CD8-positive, alpha-beta T cell (primary cell): ENCODE measurements at regions of chr1 and their contacts with region 1.

Region 1: DNA sequence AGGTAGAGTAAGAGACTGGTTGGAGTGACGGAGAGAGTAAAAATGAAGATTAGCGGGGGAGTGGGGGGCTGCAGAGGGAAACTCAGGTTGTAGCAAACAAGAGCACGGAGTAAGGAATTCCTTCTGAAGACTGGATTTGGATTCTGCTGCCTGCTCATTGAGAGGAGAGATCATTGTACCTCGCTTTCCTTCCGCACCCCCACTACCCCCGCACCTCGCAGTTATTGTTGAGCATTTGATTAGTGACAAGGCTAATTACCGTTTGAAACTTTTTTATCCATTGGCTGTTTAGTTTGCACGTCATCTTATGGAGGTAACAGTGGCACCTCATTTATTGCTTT is 463 bp downstream of the PRPF3 start:
- DNase-seq: peak in 2 of 9 experiments; percentile 24 to 26
- ATAC-seq: peak; percentile 24
- H3K4me3 ChIP-seq: peak overlapping the region; percentile 87 to 96
- H3K4me3 Mint-ChIP-seq: peak overlapping the region; percentile 99
- H3K27ac ChIP-seq: peak overlapping the region; percentile 92 to 93
- H3K27ac Mint-ChIP-seq: peak overlapping the region; percentile 99
- H3K4me1 ChIP-seq: peaks cover 19% of the 10 kb centered on the region
- H3K4me1 Mint-ChIP-seq: peaks cover 50% of the 10 kb centered on the region
- H3K27me3 ChIP-seq: no peaks in the 10 kb centered on the region
- H3K27me3 Mint-ChIP-seq: no peaks in the 10 kb centered on the region
- CTCF ChIP-seq: no peak

Region 2: GRCh38 chr1:150121236-150121862 is 200.4 kb before region 1 on chr1:
- CTCF ChIA-PET with region 1: no interaction called
- POLR2A ChIA-PET with region 1: no interaction called
- intact Hi-C with region 1: no loop called
- DNase-seq: no peak
- ATAC-seq: no peak
- H3K4me3 ChIP-seq: no peak overlapping the region
- H3K4me3 Mint-ChIP-seq: no peak overlapping the region
- H3K27ac ChIP-seq: no peak overlapping the region
- H3K27ac Mint-ChIP-seq: no peak overlapping the region
- H3K4me1 ChIP-seq: no peaks in the 10 kb centered on the region
- H3K4me1 Mint-ChIP-seq: peaks cover 3% of the 10 kb centered on the region
- H3K27me3 ChIP-seq: no peaks in the 10 kb centered on the region
- H3K27me3 Mint-ChIP-seq: no peaks in the 10 kb centered on the region
- CTCF ChIP-seq: no peak

Region 3: DNA sequence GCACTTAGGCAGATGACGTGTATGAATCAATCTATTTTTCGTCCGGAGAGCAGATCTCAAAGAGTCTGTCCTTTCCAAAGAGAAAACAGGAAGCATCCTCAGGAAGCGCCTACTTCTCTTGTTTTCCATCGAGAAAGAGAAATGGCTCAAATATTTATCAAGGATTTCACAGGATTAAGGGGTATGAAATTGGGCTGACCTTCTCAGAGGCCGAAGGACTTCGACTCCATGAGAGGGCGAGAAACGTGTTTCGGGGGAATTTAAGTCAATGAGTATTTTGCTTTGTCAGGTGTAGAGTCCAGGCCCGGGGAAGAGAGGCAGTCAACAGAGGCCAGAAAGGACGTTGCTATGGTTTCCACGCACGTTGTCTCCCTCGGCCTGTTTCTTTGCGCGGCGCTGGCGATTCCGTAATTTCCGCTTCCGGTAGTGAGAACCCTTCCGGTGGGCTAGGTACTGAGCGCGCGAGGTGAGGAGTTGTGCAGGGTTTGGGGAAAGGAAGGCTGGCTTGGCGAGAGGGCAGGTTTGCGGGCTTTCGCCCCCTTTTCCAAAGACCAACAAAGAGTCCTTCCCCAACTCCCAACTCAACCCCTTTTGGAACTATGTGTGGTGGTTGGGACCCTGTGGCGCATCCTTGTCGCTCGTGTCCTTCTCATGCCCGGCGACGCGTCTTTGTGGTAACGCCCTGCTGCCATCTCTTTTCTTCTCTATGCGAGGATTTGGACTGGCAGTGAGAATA is 28.2 kb before region 1 on chr1 and contains the start of gene MRPS21:
- CTCF ChIA-PET with region 1: no interaction called
- POLR2A ChIA-PET with region 1: no interaction called
- intact Hi-C with region 1: loop called (anchors 1 kb)
- DNase-seq: peak; percentile 75 to 96 (median 84)
- ATAC-seq: peak; percentile 94
- H3K4me3 ChIP-seq: peak within 1 kb of the TSS; percentile 72 to 79
- H3K4me3 Mint-ChIP-seq: peak within 1 kb of the TSS; percentile 91
- H3K27ac ChIP-seq: peak within 1 kb of the TSS; percentile 96 to 98
- H3K27ac Mint-ChIP-seq: peak within 1 kb of the TSS; percentile 94
- H3K4me1 ChIP-seq: peaks cover 15% of the 10 kb centered on the region
- H3K4me1 Mint-ChIP-seq: peaks cover 35% of the 10 kb centered on the region
- H3K27me3 ChIP-seq: no peaks in the 10 kb centered on the region
- H3K27me3 Mint-ChIP-seq: no peaks in the 10 kb centered on the region
- CTCF ChIP-seq: no peak
- total RNA-seq, gene MRPS21: 41.6 to 43.9 TPM